Spleen (tissue), 13 donors: ENCODE measurements at regions of chr2 and their contacts with region 1.

Region 1: GRCh38 chr2:38274286-38275276 is 102.5 kb downstream of the ATL2 start:
- DNase-seq: no peak
- H3K4me3 ChIP-seq: no peak overlapping the region
- H3K27ac ChIP-seq: peak overlapping the region in 1 of 8 donors; percentile 20
- H3K4me1 ChIP-seq: peaks cover 0 to 4% (median 0%) of the 10 kb centered on the region in 6 donors
- H3K27me3 ChIP-seq: no peaks in the 10 kb centered on the region
- CTCF ChIP-seq: peak; percentile 16 to 83 (median 63)
- POLR2A ChIP-seq: no peak

Region 2: DNA sequence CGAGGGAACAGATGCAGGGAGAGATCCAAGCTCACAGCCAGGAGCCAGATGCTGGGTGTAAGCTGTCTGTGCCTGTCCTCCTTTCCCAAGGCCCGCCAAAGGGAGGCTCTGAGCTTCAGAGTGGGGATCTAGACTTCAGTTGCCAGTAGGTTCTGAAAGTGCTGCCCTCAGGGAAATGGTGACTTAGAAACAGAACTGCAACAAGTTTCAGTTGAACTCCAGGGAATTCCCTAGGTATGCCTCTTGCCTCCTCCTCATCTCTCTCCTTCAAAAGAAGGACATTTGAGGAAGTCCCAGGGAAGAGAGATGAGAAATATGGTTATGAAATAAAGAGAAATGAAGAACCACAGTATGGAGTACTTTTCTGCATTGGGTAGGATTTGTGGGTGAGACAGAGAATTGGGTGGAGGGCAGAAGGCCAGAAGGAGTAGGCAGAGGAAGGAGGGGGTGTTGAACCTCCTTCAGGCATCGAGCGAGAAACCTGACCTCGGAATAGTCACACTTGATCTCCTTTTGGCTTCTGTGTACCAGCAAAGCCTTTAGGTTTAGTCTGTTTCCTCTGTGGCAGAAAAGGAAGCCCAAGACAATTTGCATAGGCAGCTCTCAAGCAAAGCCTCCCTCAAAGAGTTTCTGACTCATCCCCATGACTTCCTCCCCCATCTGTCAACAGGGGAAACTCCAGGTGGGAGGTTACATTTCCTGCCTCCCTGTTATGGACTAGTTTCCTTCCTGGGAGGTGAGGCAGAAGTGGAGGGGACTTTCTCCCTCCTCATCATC is 884.4 kb before region 1 on chr2:
- intact Hi-C with region 1: loop called (anchors 10 kb)
- DNase-seq: no peak
- H3K4me3 ChIP-seq: no peak overlapping the region
- H3K27ac ChIP-seq: peak overlapping the region; percentile 28 to 74 (median 68)
- H3K4me1 ChIP-seq: peaks cover 12 to 29% (median 20%) of the 10 kb centered on the region in 6 donors
- H3K27me3 ChIP-seq: no peaks in the 10 kb centered on the region
- CTCF ChIP-seq: no peak
- POLR2A ChIP-seq: no peak

Region 3: DNA sequence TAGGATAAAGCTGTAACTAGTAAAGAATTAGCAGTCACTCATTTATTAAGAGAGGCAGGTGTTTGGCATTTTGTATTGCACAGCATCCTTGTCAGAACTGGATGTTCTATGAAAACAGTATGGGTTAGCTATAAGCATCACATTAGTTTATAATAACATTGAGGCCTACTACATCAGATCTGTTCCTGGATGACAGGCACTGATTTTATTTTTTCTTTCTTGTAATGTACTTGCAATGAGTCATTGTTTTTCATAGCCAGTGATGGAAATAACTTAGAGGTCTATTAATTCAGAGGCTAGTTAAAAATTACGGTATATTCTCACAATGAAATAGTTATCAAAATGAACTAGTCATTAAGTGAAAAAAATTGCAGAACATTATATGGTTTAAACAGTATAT is 362.5 kb before region 1 on chr2:
- intact Hi-C with region 1: no loop called
- DNase-seq: no peak
- H3K4me3 ChIP-seq: no peak overlapping the region
- H3K27ac ChIP-seq: no peak overlapping the region
- H3K4me1 ChIP-seq: no peaks in the 10 kb centered on the region
- H3K27me3 ChIP-seq: no peaks in the 10 kb centered on the region
- CTCF ChIP-seq: no peak
- POLR2A ChIP-seq: no peak

Region 4: DNA sequence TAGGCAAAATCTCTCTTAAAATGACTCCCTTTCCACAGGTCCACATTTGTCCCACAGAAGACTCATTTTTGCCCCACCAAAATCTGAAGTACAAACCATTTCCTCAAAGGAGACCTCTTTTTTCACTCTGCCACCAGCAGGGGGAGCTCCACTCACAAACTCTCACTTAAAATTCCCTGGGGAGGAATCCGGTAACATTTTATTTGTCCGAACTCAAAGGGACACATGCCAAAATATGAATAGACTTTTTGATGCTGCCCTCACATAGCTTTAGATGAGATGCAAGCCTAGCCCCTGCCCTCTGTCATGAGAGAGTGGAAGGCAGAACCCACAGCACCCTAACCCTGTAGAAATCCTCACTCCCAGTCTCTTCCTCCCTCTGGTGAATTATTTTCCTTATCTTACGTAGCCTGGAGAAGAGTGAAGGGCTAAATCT is 292.4 kb before region 1 on chr2:
- intact Hi-C with region 1: loop called (anchors 5 kb)
- DNase-seq: peak; percentile 71
- H3K4me3 ChIP-seq: peak overlapping the region in 1 of 8 donors; percentile 38
- H3K27ac ChIP-seq: peak overlapping the region in 1 of 8 donors; percentile 23
- H3K4me1 ChIP-seq: peaks cover 0 to 9% (median 6%) of the 10 kb centered on the region in 6 donors
- H3K27me3 ChIP-seq: no peaks in the 10 kb centered on the region
- CTCF ChIP-seq: peak; percentile 29 to 83 (median 72)
- POLR2A ChIP-seq: no peak